Common myeloid progenitor, CD34-positive (primary cell): ENCODE measurements at regions of chr5 and their contacts with region 1.

Region 1: DNA sequence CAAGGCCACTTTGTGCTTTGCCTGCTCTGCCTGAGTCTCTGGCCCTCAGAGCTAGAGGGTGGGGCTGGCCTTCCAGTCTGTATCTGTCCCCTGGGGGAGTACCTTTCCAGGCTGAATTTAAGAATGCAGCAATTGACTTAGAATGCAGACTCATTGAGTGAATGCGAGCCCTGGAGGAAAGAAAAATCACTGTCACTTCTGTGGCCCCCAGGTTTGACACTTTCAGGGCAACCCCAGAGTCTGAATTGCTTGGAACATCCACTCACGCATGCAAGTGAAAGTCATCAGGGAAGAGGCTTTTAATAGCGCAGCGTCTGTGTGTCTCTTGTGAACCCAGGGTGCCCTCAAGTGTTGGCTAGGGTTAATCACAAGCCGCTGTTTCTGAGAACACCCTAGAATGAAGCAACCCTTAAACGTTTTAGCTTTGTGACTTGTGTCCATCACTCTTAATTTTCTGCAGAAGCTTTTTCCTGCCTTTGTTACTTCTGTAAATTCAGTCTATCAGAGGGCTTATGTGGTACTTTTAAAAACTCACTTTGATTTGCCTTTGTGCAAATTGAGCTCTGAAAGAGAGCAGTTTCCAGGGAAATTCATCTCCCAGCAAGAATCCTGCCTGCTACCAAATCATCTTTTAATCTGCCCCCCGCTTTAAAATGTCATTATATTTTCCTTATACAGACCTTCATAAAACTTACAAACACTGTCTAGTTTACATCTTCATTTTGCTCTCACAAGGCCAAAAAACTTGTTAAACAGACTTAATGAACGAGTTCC is 146.8 kb upstream of the IQGAP2 start:
- DNase-seq: peak; percentile 80 to 89 (median 85)
- H3K4me3 ChIP-seq: no peak overlapping the region
- H3K27ac ChIP-seq: no peak overlapping the region
- H3K4me1 ChIP-seq: peaks cover 5 to 30% (median 16%) of the 10 kb centered on the region in 4 experiments
- H3K27me3 ChIP-seq: no peaks in the 10 kb centered on the region

Region 2: DNA sequence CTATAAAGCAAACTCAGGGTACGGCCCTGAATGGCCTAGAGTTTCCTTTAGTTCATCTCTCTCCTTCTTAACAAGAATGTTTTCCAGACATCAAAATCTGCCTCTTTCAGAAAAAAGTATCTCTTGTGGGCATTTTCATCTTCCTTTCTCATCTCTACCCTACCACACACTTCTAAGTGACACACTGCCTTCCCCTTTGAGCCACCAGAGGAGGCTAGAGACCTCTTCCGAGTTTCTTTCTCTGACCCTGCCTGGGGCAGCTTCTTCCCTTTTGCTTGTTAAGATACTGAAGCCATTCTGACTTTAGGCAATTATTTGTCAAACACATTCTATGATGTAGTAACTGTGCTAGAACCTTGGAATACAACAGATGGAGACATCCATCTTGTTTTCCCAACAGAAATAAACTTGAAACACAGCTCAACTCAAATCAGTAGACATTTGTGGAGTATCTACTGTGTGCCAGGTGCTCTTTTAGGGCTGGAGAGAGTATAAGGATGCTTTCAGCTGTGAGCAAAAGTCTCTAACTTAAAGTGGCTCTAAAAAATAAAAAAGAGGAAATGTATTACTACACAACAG is 181.7 kb before region 1 on chr5:
- CTCF ChIA-PET with region 1: interaction called, 22 read pairs
- POLR2A ChIA-PET with region 1: no interaction called
- DNase-seq: peak; percentile 45 to 65 (median 65)
- H3K4me3 ChIP-seq: no peak overlapping the region
- H3K27ac ChIP-seq: no peak overlapping the region
- H3K4me1 ChIP-seq: no peaks in the 10 kb centered on the region
- H3K27me3 ChIP-seq: peaks cover 6 to 21% (median 18%) of the 10 kb centered on the region in 5 experiments